Mammary epithelial cell (primary cell): ENCODE measurements at regions of chr1 and their contacts with region 1.

Region 1: GRCh38 chr1:204257954-204258752 is 44.4 kb upstream of the GOLT1A start:
- DNase-seq: peak; percentile 15
- H3K4me3 ChIP-seq: no peak overlapping the region
- H3K27ac ChIP-seq: no peak overlapping the region
- H3K4me1 ChIP-seq: no peaks in the 10 kb centered on the region
- H3K27me3 ChIP-seq: no peaks in the 10 kb centered on the region
- CTCF ChIP-seq: peak; percentile 68 to 84

Region 2: GRCh38 chr1:203555076-203555475 is 703.1 kb before region 1 on chr1:
- CTCF ChIA-PET with region 1: no interaction called
- dilution Hi-C with region 1: no loop called
- in situ Hi-C with region 1: no loop called
- intact Hi-C with region 1: no loop called
- DNase-seq: no peak
- H3K4me3 ChIP-seq: no peak overlapping the region
- H3K27ac ChIP-seq: no peak overlapping the region
- H3K4me1 ChIP-seq: peaks cover 40% of the 10 kb centered on the region
- H3K27me3 ChIP-seq: no peaks in the 10 kb centered on the region
- CTCF ChIP-seq: no peak

Region 3: DNA sequence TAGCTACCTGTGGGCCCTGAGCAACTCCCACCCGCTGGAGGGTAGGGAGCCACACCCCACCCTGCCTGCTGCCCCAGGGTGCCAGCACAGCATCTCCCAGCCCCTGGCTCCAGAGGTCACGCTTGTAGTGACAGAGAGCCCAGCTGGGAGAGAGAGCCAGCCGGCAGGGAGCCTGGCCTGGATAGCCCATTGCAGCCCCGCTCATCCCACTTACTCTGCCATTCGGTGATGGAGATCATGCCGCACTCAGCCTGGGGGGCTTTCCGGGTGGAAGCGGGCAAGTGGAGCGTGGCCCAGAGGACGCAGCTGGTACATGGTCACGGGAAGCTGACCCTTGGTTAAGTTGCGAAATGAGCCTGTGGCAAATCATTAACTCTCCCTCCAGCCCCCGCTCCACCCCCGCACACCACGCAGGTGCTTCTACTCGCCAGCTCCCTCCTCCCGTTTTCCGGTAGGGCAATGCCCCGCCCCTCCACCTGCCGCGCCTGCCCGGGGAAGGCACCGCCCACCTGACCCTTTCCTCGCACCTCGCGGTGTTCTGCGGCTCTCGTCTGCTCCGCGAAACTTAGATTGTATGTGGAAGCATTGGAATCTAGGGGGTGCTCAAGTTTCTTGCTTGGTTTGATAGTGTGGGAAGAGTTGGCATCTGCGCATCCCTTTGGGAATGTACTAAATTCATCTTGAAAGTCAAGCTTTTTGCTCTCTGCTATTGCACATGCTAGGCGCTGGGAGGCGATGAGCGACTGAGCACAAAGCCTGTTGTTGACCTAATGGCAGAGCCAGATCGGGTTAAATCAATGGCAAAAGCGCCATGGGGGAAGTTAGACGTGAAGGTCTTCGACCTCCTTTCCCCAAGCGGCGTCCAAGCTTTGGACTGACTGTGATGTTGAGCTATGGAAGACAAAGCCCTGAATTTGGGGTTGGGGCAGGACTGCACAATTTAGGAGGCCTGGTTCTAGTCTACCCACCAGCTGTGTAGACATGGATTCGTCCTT is 44.2 kb before region 1 on chr1 and contains the start of gene GOLT1A:
- CTCF ChIA-PET with region 1: interaction called, 4 read pairs
- dilution Hi-C with region 1: loop called (anchors 5 kb)
- in situ Hi-C with region 1: no loop called
- intact Hi-C with region 1: loop called (anchors 1 kb)
- DNase-seq: peak; percentile 73
- H3K4me3 ChIP-seq: peak within 1 kb of the TSS; percentile 1 to 38 (median 34)
- H3K27ac ChIP-seq: no peak within 1 kb of the TSS
- H3K4me1 ChIP-seq: peaks cover 11% of the 10 kb centered on the region
- H3K27me3 ChIP-seq: no peaks in the 10 kb centered on the region
- CTCF ChIP-seq: peak; percentile 76 to 77
- total RNA-seq, gene GOLT1A: 0.59 TPM in 1 of 2 donors, not detected in the other

Region 4: DNA sequence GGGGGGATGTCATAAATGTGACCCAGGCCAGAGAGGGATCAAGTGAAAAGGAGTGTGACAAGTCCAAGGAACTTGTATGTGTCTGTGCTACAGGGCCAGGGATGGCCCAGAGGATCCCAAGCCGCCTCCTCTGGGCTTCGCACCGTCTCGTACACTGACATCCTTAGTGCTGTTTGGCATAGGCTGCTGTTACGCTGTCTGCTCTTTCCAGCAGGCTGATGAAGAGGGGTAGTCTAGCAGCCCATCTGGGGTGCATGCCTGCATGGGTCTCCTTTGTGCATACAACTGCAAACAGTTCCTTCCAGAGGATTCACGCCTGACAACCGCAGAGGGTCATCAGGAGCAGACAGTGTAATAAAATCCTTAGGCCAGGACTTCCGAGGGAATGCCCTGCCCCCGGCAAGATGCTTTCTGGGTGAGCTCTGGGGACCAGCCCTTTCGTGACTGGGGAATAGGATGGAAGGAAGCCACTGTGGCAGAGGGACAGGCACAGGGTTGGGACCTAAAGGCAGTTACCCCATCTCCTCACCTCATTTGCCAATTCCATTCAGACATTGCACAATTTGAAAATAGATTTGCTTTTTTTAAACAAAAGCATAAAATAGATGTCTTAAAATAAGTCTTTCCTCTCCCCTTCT is 38.1 kb before region 1 on chr1:
- CTCF ChIA-PET with region 1: no interaction called
- dilution Hi-C with region 1: loop called (anchors 5 kb)
- in situ Hi-C with region 1: no loop called
- intact Hi-C with region 1: no loop called
- DNase-seq: no peak
- H3K4me3 ChIP-seq: no peak overlapping the region
- H3K27ac ChIP-seq: no peak overlapping the region
- H3K4me1 ChIP-seq: no peaks in the 10 kb centered on the region
- H3K27me3 ChIP-seq: no peaks in the 10 kb centered on the region
- CTCF ChIP-seq: no peak

Region 5: DNA sequence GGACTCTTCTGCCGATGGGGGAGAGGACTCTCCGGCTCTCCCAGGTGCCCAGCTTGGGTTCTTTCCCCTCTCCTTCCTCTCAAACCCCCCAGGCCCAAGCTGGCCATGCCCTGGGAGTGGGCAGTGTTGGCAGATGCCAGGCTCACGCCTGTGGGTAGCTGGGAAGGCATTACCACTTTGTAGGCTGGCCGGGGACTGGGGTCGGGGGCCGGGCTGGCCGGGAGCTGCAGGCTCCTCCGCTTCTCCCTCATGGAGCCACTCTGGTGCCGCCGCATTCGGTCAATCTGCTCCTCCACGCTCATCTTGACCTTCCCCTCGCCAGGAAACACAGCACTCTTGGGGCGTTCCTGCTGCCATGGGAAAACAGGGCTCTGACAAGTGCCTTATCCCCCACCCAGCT is 27.9 kb before region 1 on chr1:
- CTCF ChIA-PET with region 1: no interaction called
- dilution Hi-C with region 1: no loop called
- in situ Hi-C with region 1: no loop called
- intact Hi-C with region 1: no loop called
- DNase-seq: no peak
- H3K4me3 ChIP-seq: no peak overlapping the region
- H3K27ac ChIP-seq: no peak overlapping the region
- H3K4me1 ChIP-seq: peaks cover 18% of the 10 kb centered on the region
- H3K27me3 ChIP-seq: no peaks in the 10 kb centered on the region
- CTCF ChIP-seq: no peak

Region 6: DNA sequence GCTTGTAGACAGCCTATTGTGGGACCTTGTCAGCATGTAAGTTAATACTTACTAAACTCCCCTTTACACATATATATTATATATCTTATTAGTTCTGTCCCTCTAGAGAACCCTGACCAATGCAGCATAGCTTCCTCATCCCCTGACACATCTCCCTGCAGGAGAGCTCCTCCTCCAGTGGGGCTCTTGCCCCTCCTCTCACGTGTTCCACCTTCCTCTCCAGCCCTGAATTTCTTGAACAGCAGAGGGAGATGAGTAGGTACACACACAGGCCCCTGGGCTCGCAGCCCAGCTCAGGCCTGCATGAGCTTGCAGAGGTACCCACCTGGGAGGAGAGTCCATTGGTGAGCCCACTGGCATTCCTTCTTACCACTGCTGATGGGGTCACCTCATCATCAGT is 17.1 kb before region 1 on chr1:
- CTCF ChIA-PET with region 1: no interaction called
- dilution Hi-C with region 1: no loop called
- in situ Hi-C with region 1: no loop called
- intact Hi-C with region 1: loop called (anchors 2 kb)
- DNase-seq: peak; percentile 18
- H3K4me3 ChIP-seq: no peak overlapping the region
- H3K27ac ChIP-seq: no peak overlapping the region
- H3K4me1 ChIP-seq: no peaks in the 10 kb centered on the region
- H3K27me3 ChIP-seq: no peaks in the 10 kb centered on the region
- CTCF ChIP-seq: peak in 1 of 2 donors; percentile 32

Region 7: GRCh38 chr1:204372181-204372580 is 114.0 kb after region 1 on chr1:
- CTCF ChIA-PET with region 1: interaction called, 16 read pairs
- dilution Hi-C with region 1: no loop called
- in situ Hi-C with region 1: loop called in 1 of 2 experiments (anchors 10 kb)
- intact Hi-C with region 1: no loop called
- DNase-seq: no peak
- H3K4me3 ChIP-seq: no peak overlapping the region
- H3K27ac ChIP-seq: no peak overlapping the region
- H3K4me1 ChIP-seq: no peaks in the 10 kb centered on the region
- H3K27me3 ChIP-seq: no peaks in the 10 kb centered on the region
- CTCF ChIP-seq: no peak